Ovary (tissue), 10 donors: ENCODE measurements at regions of chr6 and their contacts with region 1.

Region 1: DNA sequence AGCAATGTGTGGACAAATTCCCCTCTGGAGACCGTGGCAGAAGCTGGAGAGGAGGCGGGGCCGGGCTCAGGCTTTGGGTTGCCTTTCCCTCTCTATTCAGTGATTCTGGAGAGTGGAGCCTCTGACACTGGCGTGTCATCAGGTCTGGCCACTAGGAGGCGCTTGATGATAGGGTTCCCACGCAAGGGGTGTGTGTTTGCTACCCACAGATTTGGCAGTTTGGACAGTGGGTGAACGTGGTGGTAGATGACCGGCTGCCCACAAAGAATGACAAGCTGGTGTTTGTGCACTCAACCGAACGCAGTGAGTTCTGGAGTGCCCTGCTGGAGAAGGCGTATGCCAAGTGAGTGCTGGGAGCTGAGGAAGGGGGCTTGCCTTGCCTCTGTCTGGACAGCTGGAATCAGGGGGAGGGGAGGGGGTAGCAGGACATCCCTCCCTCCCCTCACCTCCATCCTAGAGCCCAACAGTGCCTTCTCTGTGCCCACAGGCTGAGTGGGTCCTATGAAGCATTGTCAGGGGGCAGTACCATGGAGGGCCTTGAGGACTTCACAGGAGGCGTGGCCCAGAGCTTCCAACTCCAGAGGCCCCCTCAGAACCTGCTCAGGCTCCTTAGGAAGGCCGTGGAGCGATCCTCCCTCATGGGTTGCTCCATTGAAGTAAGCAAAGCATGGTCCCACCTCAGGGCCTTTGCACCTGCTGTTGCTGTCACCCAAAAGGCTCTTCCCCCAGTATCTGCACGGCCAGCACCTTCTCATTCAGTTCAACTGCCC is 14.3 kb downstream of the CAPN11 start:
- DNase-seq: peak; percentile 68 to 87 (median 86)
- H3K4me3 ChIP-seq: no peak overlapping the region
- H3K27ac ChIP-seq: no peak overlapping the region
- H3K4me1 ChIP-seq: peaks cover under 1% of the 10 kb centered on the region
- H3K27me3 ChIP-seq: no peaks in the 10 kb centered on the region
- CTCF ChIP-seq: peak; percentile 69 to 87 (median 72)
- EP300 ChIP-seq: no peak
- POLR2A ChIP-seq: no peak

Region 2: DNA sequence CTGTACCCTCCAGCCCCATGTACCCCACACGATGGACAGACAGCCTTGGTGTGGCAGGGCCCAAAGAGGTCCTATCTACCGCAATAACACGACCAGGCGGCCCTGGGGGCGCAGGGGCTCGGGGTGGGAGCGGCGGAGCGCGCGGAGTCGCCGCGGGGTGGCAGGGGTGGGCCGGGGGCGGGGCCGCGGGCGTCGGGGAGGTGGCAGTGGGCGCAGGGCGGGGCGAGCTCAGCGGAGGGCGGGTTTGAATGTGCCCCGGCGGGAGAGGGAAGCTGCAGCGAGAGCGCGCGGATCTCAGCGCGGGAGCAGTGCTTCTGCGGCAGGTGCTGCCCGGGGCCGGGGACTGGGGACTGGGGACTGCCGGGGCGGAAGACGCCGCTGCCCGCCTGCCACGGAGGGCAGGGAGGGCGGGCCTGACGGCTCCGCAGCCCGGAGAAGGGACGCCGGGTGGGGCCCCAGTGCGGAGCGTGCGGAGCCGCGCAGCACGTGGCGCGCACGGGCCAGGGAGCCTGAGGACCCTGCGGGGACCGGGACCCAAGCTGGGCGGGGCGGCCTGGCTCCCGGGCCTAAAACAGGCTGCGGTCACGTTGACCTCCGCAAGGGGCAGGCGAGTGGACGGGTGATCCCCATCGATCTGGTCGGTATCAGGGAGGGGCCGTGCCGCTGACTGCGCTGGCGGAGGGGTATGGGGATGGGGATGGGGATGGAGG is 50.6 kb after region 1 on chr6 and contains the start of gene SLC29A1:
- intact Hi-C with region 1: loop called in 1 of 4 experiments (anchors 5 kb)
- DNase-seq: peak; percentile 70 to 79 (median 77)
- H3K4me3 ChIP-seq: peak within 1 kb of the TSS; percentile 53
- H3K27ac ChIP-seq: peak within 1 kb of the TSS; percentile 67 to 72
- H3K4me1 ChIP-seq: peaks cover 37% of the 10 kb centered on the region
- H3K27me3 ChIP-seq: no peaks in the 10 kb centered on the region
- CTCF ChIP-seq: no peak
- EP300 ChIP-seq: no peak
- POLR2A ChIP-seq: peak; percentile 9
- total RNA-seq, gene SLC29A1: 11.2 to 35.4 (median 30.2) TPM

Region 3: DNA sequence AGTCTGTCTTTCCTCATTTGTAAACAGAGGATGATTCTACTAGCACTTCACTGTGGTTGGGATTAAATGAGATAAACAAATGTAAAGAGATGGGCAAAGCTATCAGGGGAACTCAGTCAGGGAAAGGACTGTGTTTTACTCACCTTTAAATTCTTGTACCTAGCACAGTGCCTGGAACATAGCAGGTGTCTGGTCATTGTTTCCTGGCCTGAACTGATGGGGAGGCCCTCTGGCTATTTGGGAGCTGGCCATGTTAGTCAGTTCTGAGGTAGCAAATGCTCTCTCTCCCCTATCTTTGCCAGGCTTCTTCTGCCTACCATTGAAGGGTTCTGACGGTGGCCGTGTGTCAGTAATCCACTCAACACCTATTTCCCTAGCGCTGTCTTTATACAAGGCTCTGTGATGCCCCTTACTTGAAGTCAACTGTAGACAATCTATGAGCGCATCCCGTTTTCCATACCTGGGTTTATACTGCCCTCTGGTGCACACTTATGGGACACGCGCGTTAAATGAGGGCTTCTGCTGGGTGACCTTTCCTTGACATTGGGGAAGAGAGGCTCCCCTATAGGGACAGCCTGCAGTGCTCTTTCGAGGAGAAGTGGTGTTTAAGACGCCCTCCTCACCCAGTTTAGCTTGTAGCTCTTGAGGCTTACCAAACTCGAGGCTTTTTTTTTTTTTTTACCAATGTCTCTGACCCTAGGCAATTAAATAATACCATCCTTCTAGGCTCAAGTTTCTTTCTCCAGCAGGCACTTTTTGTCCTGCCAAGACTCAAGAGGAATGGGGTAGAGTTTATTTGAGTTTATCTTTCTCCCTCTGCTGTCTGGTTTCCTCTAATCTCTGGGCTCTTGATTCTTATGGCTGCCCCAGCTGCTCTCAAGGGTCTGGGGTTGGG is 165.6 kb after region 1 on chr6:
- intact Hi-C with region 1: loop called in 2 of 4 experiments (anchors 10 kb)
- DNase-seq: peak; percentile 14 to 53 (median 49)
- H3K4me3 ChIP-seq: no peak overlapping the region
- H3K27ac ChIP-seq: no peak overlapping the region
- H3K4me1 ChIP-seq: peaks cover 3% of the 10 kb centered on the region
- H3K27me3 ChIP-seq: no peaks in the 10 kb centered on the region
- CTCF ChIP-seq: peak; percentile 29 to 38 (median 37)
- EP300 ChIP-seq: no peak
- POLR2A ChIP-seq: no peak